Right ventricle myocardium inferior (tissue), 1 donor: ENCODE measurements at regions of chr4 and their contacts with region 1.

Region 1: GRCh38 chr4:140252742-140253555 is 99.0 kb upstream of the MAML3 start:
- DNase-seq: peak; percentile 88
- ATAC-seq: peak; percentile 86

Region 2: GRCh38 chr4:139656614-139657486 is 596.1 kb before region 1 on chr4:
- intact Hi-C with region 1: loop called (anchors 2 kb)
- DNase-seq: no peak
- ATAC-seq: peak; percentile 67

Region 3: DNA sequence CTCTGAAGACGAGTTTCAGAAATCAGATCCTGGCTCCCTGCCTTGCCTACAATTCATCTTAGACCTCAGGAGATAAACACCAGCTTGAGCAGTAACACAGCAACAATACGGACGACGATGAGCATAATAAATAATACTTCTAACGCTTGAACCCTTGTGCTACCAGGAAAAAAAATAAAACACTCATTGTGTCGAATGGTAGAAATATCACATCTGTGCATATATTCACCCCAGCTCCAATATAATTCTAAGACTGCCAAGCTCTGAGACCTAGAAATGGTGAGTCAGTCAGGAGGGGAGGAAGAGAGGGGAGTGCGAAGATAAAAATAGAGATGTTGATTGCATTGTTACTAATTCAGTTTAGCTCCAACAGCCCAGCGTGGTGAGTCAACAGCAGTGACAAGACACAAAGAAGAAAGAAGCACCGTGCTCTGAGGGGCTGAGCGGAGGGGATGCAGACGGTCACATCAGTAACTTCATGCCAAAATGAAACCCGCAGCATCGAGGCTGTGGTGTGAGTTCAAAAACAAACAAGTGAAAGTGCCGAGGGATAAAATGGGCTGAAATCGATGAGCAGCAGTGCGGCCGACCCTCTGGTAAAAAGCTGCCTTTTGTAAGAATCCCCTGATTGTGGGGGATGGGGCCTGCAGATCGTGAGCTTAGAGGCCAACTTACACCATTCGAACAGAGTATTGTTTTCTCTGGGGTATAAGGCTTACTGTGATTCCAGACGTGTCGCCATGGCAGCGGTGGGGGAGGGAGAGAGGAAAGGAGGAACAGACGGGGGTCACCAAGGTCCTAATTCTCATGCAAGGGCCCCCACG is 437.0 kb before region 1 on chr4:
- intact Hi-C with region 1: loop called (anchors 5 kb)
- DNase-seq: no peak
- ATAC-seq: peak; percentile 72

Region 4: DNA sequence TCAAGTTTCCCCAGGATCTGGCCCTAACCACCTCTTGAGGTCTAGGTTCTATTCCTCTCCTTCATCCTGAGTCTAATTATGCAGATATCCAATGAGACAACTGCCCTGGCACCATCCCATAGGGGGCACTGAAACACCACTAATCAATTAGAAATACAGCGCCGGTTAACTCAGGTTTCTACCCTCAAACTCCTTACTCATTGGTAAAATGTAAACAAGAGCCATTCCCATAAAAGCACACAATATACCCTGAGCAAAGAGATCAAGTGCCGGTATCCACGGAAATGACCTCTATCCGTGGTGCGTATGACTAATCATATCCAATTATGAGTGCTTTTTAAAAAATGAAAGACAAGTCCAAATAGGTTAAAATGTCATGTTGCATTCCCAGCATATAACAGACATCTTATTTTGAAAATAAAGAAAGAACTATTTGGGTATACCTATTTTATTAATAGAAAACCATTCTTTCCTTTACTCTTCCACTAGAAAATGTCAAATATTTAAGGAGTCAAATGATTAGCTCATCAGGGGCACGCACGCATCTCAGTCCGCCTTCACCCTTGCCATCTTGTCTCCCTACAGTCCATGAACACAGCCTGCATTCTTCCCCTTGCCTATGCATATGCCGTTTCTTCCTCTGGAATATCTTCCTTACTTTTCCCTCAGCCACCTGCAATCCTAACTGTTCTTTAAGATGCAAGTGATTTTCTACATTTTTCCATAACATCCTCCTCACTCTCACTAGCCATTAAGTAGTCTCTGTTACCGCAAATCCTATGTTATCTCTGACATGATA is 240.1 kb before region 1 on chr4:
- intact Hi-C with region 1: loop called (anchors 1 kb)
- DNase-seq: no peak
- ATAC-seq: peak; percentile 87

Region 5: DNA sequence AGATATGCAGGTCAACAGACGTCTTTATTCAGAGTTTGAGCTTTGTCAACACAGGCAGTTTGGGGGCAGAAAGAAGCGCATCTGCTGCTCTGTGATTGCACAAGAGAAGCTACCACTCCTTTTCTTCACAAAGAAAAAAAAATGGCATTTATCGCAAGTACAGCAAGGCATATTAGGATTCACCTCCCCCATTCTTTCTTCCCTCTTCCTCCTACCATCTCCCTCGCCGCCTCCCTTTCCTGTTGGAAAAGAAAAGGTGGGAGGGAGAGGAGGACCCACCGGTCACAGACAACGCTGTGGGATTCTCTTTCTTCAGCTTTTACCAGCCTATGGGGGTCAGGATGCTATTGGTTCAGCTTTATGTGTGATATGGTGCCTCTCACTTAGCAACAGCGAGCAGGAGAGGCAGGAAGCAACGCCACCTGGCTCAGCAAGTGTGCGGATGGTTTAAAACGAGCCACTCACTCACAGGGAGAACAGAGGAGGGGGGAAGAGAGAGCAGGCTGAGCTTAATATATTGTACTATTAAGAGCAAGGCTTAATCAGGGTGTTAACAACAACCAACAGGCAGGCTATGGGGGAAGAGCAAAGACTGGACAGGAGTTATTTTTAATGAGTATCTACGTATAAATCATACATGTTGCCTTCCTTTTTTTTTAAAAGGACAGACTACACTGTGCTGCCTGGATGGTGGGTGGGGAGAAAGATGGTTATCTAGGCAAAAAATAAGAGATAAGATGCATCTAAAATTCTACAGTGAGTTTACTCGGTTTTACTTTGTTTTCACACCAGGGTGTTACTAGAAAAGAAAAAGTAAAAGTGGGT is 203.7 kb before region 1 on chr4:
- intact Hi-C with region 1: loop called (anchors 2 kb)
- DNase-seq: peak; percentile 71
- ATAC-seq: peak; percentile 67

Region 6: DNA sequence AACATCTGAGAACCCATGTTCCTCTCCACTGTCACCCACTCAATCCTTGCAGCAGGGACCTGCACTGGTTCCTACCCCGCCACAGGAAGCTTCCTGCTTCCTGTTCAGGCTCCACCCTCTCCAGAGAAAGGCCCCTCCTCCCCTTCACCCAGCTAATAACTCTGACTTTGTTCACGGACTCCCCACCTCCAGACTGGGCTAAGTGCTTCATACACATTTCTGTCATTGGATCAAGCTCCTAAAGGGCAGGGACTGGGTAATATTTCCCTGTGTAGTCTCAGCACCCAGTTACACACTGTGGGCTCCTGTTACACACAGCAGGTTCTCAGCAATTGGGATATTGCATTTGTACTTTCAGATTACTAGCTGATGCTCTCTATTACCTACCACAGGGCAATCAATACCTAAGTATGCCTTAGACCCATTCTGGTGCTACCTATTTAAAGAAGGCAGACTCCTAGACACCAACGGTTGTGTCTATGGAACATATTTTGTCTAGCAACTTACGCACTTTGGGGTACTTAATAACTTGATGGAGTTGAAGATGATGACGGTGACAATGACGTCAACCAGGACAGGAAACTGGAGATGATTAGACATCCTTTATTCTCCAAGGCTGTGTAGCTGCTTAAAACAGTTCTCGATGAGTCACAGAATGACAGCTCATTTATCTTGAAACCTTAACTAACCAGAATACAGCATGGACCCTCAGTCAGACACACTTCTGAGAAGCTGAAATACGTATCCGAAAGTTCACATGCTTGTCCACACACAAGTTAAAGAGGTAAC is 157.1 kb before region 1 on chr4:
- intact Hi-C with region 1: loop called (anchors 2 kb)
- DNase-seq: no peak
- ATAC-seq: no peak

Region 7: DNA sequence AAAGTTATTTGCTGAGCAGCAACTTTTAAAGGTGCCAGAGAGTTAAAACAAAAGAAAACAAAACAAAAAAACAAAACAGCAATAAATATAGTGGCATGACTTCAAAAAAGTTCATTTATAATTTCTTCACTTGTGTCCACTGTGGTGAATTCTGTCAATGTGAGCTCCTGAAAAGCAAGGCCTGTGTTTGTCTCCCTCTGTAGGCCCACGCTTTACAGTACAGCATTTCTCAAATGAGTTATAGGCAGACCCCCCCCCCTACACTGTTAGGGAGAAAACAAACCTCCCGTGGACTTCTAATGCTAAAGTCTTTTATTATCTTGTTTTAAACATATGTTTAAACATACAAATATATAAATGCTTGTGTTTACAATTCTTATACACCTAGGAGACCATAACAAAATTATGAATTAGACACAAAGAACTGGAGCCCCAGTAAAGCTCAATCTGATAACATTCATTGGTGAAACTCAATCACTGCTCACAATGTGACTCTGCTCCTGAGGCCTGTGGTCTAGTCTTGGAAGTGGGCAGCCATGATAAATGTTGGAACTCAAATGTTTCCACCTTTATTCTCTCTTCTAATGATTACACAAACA is 73.5 kb after region 1 on chr4:
- intact Hi-C with region 1: loop called (anchors 1 kb)
- DNase-seq: no peak
- ATAC-seq: peak; percentile 67